HEK293 (cell line): ENCODE measurements at regions of chr1 and their contacts with region 1.

Region 1: DNA sequence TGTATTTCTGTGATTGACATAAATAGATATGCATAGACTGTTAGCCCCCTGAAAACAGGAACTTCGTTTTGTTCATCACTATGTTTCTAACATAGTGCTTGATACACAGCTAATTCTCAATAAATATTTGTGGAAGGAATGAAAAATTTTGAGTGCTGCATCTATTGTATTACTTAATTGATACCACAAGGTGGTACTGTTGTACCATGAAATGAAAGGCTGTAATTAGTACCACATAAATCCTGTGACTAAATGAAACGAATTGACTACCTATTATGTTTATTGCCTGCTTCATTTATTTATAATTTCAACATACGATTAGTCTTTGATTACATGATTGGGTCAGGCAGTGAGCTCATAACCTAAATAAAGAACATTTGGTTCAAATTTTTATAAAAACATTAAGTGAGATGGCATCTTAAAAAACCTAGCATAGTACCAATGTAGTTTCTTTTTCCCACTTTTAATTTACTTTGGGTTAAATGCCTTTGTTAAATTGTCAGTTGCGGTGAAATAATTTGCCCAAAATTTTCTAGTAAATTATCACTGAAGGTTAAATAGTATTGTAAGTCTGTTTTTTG is 15.0 kb upstream of the TGFB2 start:
- H3K4me3 ChIP-seq: no peak overlapping the region
- H3K27ac ChIP-seq: no peak overlapping the region
- H3K4me1 ChIP-seq: no peaks in the 10 kb centered on the region
- CTCF ChIP-seq: peak; percentile 35; the same call in 1 of the 2 replicates

Region 2: DNA sequence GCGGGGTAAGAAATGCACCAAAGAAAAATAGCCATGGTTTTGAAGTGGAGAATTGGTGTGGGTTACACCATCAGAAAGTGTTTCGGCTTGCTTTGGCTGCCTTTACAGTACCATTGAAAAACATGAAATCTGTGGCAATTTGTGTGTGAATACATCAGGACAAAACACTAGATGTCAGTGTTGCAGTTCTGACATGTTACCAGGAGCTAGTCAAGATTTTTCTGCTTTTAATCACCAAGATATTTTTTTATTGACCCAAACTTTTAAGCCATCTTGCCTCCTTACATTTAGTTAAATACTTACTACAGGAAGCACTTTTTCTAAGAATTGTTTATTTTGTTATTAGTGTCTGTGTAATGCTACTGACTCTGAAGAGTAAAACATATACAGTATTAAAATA is 30.7 kb before region 1 on chr1:
- CTCF ChIA-PET with region 1: interaction called, 15 read pairs
- POLR2A ChIA-PET with region 1: no interaction called
- H3K4me3 ChIP-seq: no peak overlapping the region
- H3K27ac ChIP-seq: no peak overlapping the region
- H3K4me1 ChIP-seq: peaks cover 14% of the 10 kb centered on the region
- CTCF ChIP-seq: peak; percentile 58

Region 3: DNA sequence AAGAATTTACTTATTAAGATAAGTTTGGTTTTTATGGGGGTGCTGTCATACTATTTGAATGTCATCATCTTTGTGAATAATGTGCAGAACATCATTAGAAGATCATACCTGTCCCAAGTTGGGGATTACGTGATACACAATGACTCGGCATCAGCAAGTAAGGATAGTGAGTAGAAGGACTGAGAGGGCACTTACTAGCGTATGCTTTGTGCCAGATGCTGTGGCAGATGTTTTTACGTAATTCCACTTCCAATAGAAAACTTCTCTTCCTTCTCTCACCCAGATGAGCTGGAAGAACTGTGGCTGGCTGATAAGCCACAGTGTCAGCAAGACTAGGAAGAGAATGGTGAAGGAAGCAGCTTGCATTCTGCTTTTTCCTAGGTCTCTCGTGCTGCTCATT is 13.1 kb before region 1 on chr1:
- CTCF ChIA-PET with region 1: interaction called, 10 read pairs
- POLR2A ChIA-PET with region 1: no interaction called
- H3K4me3 ChIP-seq: no peak overlapping the region
- H3K27ac ChIP-seq: no peak overlapping the region
- H3K4me1 ChIP-seq: no peaks in the 10 kb centered on the region
- CTCF ChIP-seq: no peak

Region 4: GRCh38 chr1:218473522-218473921 is 143.4 kb after region 1 on chr1:
- CTCF ChIA-PET with region 1: no interaction called
- POLR2A ChIA-PET with region 1: no interaction called
- H3K4me3 ChIP-seq: no peak overlapping the region
- H3K27ac ChIP-seq: no peak overlapping the region
- H3K4me1 ChIP-seq: no peaks in the 10 kb centered on the region; the same call in 1 of the 2 replicates
- CTCF ChIP-seq: no peak

Region 5: GRCh38 chr1:219385786-219386427 is 1055.8 kb after region 1 on chr1:
- CTCF ChIA-PET with region 1: interaction called, 11 read pairs
- POLR2A ChIA-PET with region 1: no interaction called
- H3K4me3 ChIP-seq: no peak overlapping the region
- H3K27ac ChIP-seq: no peak overlapping the region
- H3K4me1 ChIP-seq: no peaks in the 10 kb centered on the region
- CTCF ChIP-seq: 0 out of 2 replicates have a peak, but pooled peaks have one; percentile 52

Region 6: GRCh38 chr1:219566951-219567947 is 1237.1 kb after region 1 on chr1:
- CTCF ChIA-PET with region 1: interaction called, 14 read pairs
- POLR2A ChIA-PET with region 1: no interaction called
- H3K4me3 ChIP-seq: no peak overlapping the region
- H3K27ac ChIP-seq: no peak overlapping the region
- H3K4me1 ChIP-seq: no peaks in the 10 kb centered on the region
- CTCF ChIP-seq: peak; percentile 63; the same call in 1 of the 2 replicates

Region 7: GRCh38 chr1:219812491-219813203 is 1482.5 kb after region 1 on chr1:
- CTCF ChIA-PET with region 1: interaction called, 10 read pairs
- POLR2A ChIA-PET with region 1: no interaction called
- H3K4me3 ChIP-seq: no peak overlapping the region
- H3K27ac ChIP-seq: no peak overlapping the region
- H3K4me1 ChIP-seq: no peaks in the 10 kb centered on the region
- CTCF ChIP-seq: peak; percentile 76